Psoas muscle (tissue), 8 donors: ENCODE measurements at regions of chrX and their contacts with region 1.

Region 1: GRCh38 chrX:37349221-37350064 is at the start of gene PRRG1:
- DNase-seq: peak; percentile 74 to 89
- ATAC-seq: peak; percentile 91 to 94 (median 94)
- H3K4me3 ChIP-seq: peak within 1 kb of the TSS; percentile 78
- H3K27ac ChIP-seq: peak within 1 kb of the TSS; percentile 89
- H3K4me1 ChIP-seq: peaks cover 5% of the 10 kb centered on the region
- H3K27me3 ChIP-seq: peaks cover 0 to 4% (median 0%) of the 10 kb centered on the region in 3 donors
- CTCF ChIP-seq: no peak
- total RNA-seq, gene PRRG1: 8.8 to 21.3 (median 15.4) TPM

Region 2: DNA sequence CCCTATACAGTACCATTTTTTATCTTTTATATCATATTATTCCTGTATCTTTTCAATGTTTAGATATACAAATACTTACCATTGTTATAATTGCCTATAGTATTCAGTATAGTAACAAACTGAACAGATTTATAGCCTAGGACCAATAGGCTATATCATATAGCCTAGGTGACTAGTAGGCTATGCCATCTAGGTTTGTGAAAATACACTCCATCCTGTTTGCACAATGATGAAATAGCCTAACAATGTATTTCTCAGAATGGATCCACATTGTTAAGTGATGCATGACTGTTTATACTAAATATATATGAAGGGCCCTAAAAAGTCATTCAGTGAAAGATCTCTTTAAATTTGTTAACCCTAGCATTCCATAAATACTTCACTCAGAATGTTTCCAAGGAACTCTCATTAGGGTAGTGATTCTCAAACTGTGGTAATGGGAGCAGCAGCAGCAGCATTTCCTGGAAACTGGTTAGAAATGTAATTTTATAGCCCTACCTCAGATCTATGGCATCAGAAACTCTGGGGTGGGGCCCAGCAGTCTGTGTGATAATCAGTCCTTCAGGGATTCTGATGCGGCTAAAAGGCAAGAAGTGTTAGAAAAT is 74.5 kb after region 1 on chrX:
- intact Hi-C with region 1: loop called in 1 of 2 experiments (anchors 10 kb)
- DNase-seq: no peak
- ATAC-seq: no peak
- H3K4me3 ChIP-seq: no peak overlapping the region
- H3K27ac ChIP-seq: peak overlapping the region; percentile 39
- H3K4me1 ChIP-seq: peaks cover 3% of the 10 kb centered on the region
- H3K27me3 ChIP-seq: no peaks in the 10 kb centered on the region
- CTCF ChIP-seq: no peak